Gastrocnemius medialis (tissue), 4 donors: ENCODE measurements at regions of chr17 and their contacts with region 1.

Region 1: DNA sequence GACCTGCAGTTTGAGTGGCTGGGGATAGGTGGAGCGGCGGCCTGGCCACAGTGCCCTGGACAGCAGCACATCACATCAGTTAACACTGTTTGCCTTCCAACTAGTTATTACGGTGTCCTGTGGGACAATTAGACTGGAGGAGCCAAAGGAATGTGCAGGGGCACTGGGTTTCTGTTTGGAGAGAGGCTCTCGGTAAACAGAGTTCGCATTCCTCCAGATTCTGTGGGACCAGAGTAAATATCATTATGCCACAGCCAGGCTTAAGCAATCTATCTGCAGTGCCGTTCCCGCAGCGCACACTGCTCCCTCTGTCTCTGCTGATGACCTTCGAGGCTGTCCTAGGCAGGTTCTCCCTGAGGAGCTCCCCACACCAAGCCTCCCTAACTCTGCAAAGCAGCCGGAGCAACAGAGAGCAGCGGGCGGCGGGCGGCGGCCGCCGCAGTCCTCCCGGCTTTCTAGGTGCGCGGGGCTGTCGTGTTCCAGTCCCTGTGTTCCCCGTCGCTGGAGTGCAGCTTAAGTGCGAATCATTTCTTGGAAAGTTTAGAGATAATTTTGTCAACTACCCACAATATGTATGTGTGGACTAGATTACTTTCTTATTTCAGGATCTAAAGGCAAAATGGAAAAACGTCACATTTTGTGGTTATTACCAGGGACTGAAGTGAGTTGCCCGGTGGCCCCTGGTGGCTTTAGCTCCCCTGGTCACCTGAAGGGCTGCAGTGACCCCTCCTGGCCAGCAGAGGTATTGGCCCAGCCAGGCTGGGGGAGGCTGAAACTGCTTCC is 43.2 kb downstream of the PGS1 start:
- DNase-seq: peak; percentile 49 to 67
- ATAC-seq: peak; percentile 57 to 82
- H3K4me3 ChIP-seq: no peak overlapping the region
- H3K27ac ChIP-seq: peak overlapping the region in 1 of 4 donors; percentile 38
- H3K4me1 ChIP-seq: peaks cover under 1 to 14% of the 10 kb centered on the region in 2 donors
- H3K27me3 ChIP-seq: no peaks in the 10 kb centered on the region
- CTCF ChIP-seq: peak; percentile 97 to 100 (median 98)
- POLR2A ChIP-seq: no peak

Region 2: GRCh38 chr17:78250891-78251794 is 170.5 kb before region 1 on chr17:
- in situ Hi-C with region 1: no loop called
- intact Hi-C with region 1: loop called (anchors 1 kb)
- DNase-seq: peak; percentile 58 to 77
- ATAC-seq: peak; percentile 67 to 74
- H3K4me3 ChIP-seq: peak overlapping the region in 1 of 4 donors; percentile 4
- H3K27ac ChIP-seq: peak overlapping the region in 1 of 4 donors; percentile 11
- H3K4me1 ChIP-seq: peaks cover 5 to 8% of the 10 kb centered on the region in 2 donors
- H3K27me3 ChIP-seq: no peaks in the 10 kb centered on the region
- CTCF ChIP-seq: peak; percentile 97 to 100 (median 99)
- POLR2A ChIP-seq: no peak

Region 3: GRCh38 chr17:78289802-78290363 is 131.8 kb before region 1 on chr17:
- in situ Hi-C with region 1: loop called in 3 of 4 experiments (anchors 5 to 10 kb)
- intact Hi-C with region 1: loop called (anchors 1 kb)
- DNase-seq: peak; percentile 61 to 72
- ATAC-seq: peak; percentile 86 to 93
- H3K4me3 ChIP-seq: no peak overlapping the region
- H3K27ac ChIP-seq: no peak overlapping the region
- H3K4me1 ChIP-seq: peaks cover 4 to 13% of the 10 kb centered on the region in 2 donors
- H3K27me3 ChIP-seq: no peaks in the 10 kb centered on the region
- CTCF ChIP-seq: peak; percentile 71 to 84 (median 77)
- POLR2A ChIP-seq: no peak

Region 4: DNA sequence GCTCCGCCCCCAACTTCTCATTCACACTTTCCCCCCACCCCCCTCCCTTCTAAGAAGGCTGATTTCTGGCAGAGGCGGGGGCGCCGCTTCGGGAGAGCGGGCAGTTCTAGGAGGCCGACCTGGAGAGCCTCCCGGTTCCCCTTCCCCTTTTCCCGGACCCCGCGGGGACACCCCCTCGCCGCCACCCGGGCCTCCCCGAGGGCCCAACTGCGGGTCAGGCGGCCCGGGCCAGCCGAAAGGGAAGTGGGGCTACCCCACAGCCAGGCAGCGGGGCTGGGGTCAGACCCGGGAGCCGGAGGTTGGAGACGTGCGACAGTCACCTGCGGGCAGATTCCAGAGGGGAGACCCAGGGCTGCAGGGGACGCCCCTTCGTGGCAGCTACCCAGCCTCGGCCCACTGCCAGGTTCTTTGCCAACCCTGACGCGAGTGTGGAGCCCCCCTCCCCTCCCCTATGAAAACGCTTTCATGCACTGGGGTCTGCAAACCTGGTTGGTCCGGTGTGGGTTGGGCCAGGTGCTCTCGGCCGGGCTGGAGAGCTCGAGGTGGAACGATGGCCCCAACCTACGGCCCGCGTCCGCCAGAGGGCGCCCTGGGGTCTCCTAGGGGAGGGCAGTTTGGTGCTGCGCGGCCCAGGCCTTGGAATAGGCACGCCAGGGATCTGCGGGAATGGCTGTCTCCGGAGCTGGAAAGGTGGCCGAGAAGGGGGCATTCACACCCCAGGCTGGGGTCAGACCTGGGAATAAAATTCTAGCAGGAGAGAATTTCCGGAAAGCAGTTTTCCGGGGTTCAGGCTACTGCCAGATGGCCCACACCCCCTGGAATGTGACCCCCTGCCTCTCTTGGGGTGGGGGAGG is 61.1 kb before region 1 on chr17:
- in situ Hi-C with region 1: loop called in 2 of 4 experiments (anchors 5 to 10 kb)
- intact Hi-C with region 1: loop called (anchors 1 kb)
- DNase-seq: peak; percentile 80 to 88
- ATAC-seq: peak; percentile 69 to 78
- H3K4me3 ChIP-seq: peak overlapping the region; percentile 50 to 76 (median 59)
- H3K27ac ChIP-seq: peak overlapping the region; percentile 86 to 94 (median 86)
- H3K4me1 ChIP-seq: peaks cover 23 to 38% of the 10 kb centered on the region in 2 donors
- H3K27me3 ChIP-seq: no peaks in the 10 kb centered on the region
- CTCF ChIP-seq: peak; percentile 93 to 98 (median 97)
- POLR2A ChIP-seq: no peak

Region 5: DNA sequence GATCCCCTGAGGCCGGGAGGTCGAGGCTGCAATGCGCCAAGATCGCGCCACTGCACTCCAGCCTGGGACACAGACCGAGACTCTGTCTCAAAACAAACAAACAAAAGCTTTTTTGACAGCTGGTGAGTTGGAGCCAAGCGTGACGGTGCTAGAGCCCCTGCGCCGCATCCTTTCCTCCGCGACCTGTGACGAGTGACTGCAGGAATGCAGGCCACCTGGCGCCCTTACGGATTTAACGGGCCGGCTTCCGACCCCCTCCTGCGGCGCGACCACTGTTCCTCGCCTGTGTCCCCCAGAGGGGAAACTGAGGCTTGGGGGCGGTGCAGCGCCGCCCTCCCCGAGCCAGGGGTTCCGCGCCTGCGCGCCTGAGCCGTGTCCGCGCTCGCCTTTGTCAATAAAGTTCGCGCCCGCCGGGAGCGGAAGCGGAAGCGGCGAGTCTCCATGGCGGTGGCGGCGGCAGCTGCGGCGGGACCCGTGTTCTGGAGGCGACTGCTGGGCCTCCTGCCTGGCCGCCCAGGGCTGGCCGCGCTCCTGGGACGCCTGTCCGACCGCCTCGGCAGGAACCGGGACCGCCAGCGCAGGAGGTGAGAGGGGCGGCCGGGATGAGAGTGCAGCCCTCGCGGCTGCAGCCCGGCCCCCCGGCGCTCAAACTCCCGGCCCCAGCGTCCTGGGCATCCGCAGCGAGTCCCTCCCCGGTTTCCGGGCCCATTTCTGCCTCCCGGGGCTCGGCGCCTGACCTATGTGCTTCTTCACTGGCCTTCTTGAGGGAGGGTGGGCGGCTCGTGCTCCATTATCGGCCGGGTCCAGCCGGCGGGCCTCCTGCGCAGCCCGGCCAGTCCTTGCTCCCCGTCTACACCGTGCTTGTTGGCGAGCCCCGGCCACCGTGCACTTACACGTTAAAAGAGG is 43.2 kb before region 1 on chr17 and contains the start of gene PGS1:
- in situ Hi-C with region 1: loop called in 1 of 4 experiments (anchors 10 kb)
- intact Hi-C with region 1: no loop called
- DNase-seq: peak; percentile 55 to 64
- ATAC-seq: peak; percentile 75 to 80
- H3K4me3 ChIP-seq: peak within 1 kb of the TSS; percentile 74 to 99 (median 96)
- H3K27ac ChIP-seq: peak within 1 kb of the TSS; percentile 84 to 91 (median 86)
- H3K4me1 ChIP-seq: peaks cover 36 to 42% of the 10 kb centered on the region in 2 donors
- H3K27me3 ChIP-seq: no peaks in the 10 kb centered on the region
- CTCF ChIP-seq: peak in 1 of 5 experiments; percentile 20
- POLR2A ChIP-seq: peak; percentile 93 to 96
- total RNA-seq, gene PGS1: 16.6 to 30.0 (median 21.8) TPM

Region 6: DNA sequence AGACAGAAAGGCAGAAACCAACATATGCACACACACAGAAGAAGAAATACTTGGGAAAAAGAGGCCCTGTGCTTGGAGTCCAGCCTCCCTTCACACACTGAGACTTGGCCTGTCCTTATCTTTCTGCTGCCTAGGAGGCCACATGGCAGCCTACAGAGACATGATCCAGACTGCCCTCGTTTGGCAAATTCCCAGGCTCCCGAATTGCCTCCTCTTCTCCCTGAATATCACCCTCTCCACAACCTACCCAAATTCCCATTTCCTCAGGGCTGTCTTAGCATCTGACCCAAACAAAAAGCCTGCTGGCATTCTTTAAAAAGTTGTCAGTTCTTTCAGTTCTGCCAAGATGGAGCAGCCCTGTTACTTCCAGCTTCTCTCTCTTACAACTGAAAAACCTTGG is 95.7 kb after region 1 on chr17:
- in situ Hi-C with region 1: no loop called
- intact Hi-C with region 1: no loop called
- DNase-seq: no peak
- ATAC-seq: no peak
- H3K4me3 ChIP-seq: no peak overlapping the region
- H3K27ac ChIP-seq: no peak overlapping the region
- H3K4me1 ChIP-seq: no peaks in the 10 kb centered on the region
- H3K27me3 ChIP-seq: peaks cover 0 to 2% (median 0%) of the 10 kb centered on the region in 3 donors
- CTCF ChIP-seq: no peak
- POLR2A ChIP-seq: no peak

Region 7: DNA sequence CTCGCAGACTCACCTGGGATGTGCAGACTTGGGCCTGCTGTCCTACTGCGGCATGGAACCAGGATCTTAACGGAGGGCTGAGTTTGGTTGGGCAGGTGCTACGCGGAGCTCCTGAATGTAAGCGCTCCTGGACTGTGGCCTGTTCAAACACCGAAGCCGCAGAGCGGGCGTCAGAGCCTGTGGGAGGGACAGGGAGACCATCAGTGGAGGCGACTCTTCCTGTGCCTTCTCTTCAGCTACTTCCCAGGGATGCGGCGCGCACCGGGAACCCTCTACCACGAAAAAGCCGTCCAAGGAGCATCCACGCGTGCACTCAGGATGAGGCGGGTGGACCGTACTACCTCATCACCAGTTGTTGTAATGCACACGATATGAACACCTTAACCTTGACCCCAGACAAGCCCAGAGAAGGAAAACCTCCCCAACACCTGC is 416.9 kb after region 1 on chr17:
- in situ Hi-C with region 1: no loop called
- intact Hi-C with region 1: no loop called
- DNase-seq: no peak
- ATAC-seq: no peak
- H3K4me3 ChIP-seq: peak overlapping the region in 1 of 4 donors; percentile 86
- H3K27ac ChIP-seq: peak overlapping the region in 1 of 4 donors; percentile 96
- H3K4me1 ChIP-seq: peaks cover 13 to 18% of the 10 kb centered on the region in 2 donors
- H3K27me3 ChIP-seq: no peaks in the 10 kb centered on the region
- CTCF ChIP-seq: no peak
- POLR2A ChIP-seq: no peak